PC-9 (cell line): ENCODE measurements at regions of chr22 and their contacts with region 1.

Region 1: GRCh38 chr22:36856121-36856791 is 4.5 kb upstream of the NCF4 start:
- DNase-seq: peak; percentile 68 to 94
- H3K4me3 ChIP-seq: peak overlapping the region; percentile 13; the same call in 1 of the 2 replicates
- H3K27ac ChIP-seq: no peak overlapping the region
- H3K4me1 ChIP-seq: peaks cover 7% of the 10 kb centered on the region
- H3K27me3 ChIP-seq: no peaks in the 10 kb centered on the region
- CTCF ChIP-seq: peak; percentile 100

Region 2: DNA sequence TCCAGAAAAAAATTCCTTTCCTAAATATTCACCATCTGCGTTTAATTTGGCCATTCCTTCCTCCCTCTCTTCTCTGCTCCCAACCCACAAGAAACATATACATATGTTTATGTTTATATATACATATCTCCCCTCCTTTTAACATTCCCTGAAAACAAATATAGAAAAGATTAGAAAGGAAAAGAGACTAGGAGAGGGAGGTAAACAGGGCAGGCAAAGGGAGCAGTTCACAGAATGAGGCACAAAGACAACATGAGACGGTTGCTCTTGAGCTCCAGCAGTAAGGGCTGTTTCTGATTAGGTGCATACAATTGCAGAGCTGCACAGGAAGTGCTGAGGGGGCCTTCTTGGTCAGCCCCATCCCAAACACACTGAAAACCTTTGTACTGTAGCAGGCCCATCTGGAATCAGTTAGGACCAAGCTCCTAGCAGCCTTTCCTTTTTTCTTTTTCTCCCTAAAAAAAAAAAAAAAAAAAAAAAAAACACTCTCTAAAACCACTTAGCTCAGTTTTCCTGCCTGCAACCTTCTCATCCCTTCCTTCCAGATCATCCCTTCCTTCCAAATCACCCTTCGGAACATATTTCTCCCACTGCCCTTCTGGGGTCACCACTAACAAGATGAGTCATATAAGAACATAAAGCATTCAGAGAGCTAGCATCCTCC is 884.7 kb before region 1 on chr22:
- CTCF ChIA-PET with region 1: no interaction called
- POLR2A ChIA-PET with region 1: interaction called, 12 read pairs
- intact Hi-C with region 1: no loop called
- DNase-seq: no peak
- H3K4me3 ChIP-seq: no peak overlapping the region
- H3K27ac ChIP-seq: no peak overlapping the region
- H3K4me1 ChIP-seq: peaks cover 16% of the 10 kb centered on the region
- H3K27me3 ChIP-seq: no peaks in the 10 kb centered on the region
- CTCF ChIP-seq: no peak

Region 3: GRCh38 chr22:36781656-36782627 is 74.3 kb before region 1 on chr22:
- CTCF ChIA-PET with region 1: interaction called, 10 read pairs
- POLR2A ChIA-PET with region 1: no interaction called
- intact Hi-C with region 1: loop called (anchors 1 kb)
- DNase-seq: peak; percentile 80 to 93
- H3K4me3 ChIP-seq: no peak overlapping the region
- H3K27ac ChIP-seq: no peak overlapping the region
- H3K4me1 ChIP-seq: peaks cover 5% of the 10 kb centered on the region
- H3K27me3 ChIP-seq: peaks cover 9% of the 10 kb centered on the region
- CTCF ChIP-seq: peak; percentile 99

Region 4: DNA sequence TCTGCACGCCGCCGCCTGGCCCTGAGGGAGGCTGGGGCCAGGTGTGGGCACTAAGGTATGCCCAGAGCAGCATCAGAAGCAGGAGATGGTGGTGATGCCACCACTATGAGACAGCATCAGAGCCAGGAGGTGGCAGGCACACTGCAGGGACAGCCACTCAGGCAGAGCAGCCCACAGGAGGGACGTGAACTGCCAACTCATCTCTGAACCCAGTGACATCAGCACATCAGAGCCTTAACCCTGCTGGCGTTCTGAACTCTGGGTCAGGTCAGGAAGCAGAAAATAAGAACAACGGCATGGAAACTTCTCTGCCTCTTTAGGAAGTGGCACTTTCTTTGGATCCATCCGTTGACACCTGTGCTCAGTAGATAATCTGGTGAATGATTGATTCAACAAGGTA is 65.6 kb before region 1 on chr22:
- CTCF ChIA-PET with region 1: interaction called, 3 read pairs
- POLR2A ChIA-PET with region 1: no interaction called
- intact Hi-C with region 1: loop called (anchors 1 kb)
- DNase-seq: peak in 1 of 2 experiments; percentile 59
- H3K4me3 ChIP-seq: no peak overlapping the region
- H3K27ac ChIP-seq: no peak overlapping the region
- H3K4me1 ChIP-seq: no peaks in the 10 kb centered on the region
- H3K27me3 ChIP-seq: peaks cover 19% of the 10 kb centered on the region
- CTCF ChIP-seq: 0 out of 2 replicates have a peak, but pooled peaks have one; percentile 21

Region 5: DNA sequence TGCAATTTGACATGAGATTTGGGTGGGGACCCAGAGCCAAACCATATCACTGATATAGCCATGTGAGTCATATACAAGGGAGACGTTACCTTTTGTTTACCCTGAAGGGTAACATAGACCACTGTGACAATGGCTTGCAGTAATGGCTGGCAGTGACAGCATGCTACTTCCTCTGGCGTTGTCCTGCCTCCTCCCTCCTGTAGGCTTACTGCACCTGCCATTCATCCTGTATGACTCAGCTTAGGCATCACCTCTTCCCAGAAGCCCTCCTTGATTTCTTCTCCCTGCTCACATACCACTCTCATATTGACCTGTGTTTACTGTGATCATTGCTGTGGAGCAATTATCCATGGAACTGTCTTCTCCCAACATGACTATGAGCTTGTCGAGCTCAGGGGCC is 27.4 kb before region 1 on chr22:
- CTCF ChIA-PET with region 1: no interaction called
- POLR2A ChIA-PET with region 1: no interaction called
- intact Hi-C with region 1: no loop called
- DNase-seq: peak; percentile 22 to 67
- H3K4me3 ChIP-seq: no peak overlapping the region
- H3K27ac ChIP-seq: no peak overlapping the region
- H3K4me1 ChIP-seq: peaks cover 4% of the 10 kb centered on the region; the same call in 1 of the 2 replicates
- H3K27me3 ChIP-seq: no peaks in the 10 kb centered on the region
- CTCF ChIP-seq: no peak

Region 6: DNA sequence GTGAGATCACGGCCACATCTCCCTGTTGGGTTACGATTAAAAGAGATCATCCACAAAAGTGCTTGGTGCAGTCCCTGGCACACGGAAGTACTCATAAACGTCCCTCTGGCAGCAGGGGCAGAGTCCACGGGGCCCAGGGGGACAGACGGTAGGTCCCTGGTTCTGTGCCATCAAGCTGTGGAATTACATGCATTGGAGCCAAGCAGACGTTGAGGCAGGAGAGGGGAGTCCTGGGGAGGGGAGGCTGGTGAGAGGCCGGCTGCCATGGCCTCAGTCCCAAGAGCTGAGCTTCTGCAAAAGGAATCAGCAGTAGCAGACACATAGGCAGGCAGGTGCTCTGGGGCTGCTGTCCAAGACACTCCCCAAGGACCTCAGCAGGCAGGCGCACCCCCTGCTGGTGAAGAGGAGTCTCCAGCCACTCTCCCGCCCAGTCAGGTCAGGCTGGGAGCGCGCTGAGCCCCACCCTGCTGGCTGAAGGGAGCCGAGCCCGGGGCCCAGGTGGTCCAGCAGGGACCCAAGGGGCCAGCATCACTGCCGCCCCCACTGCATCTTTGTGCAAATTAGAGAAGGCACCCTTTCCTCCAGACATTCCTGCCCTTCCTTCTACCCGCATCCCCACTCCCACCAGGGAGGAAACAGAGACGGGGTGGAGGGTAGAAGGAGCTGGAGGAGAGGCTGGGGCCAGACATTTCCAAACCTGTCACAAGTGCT is 187.7 kb after region 1 on chr22:
- CTCF ChIA-PET with region 1: interaction called, 5 read pairs
- POLR2A ChIA-PET with region 1: no interaction called
- intact Hi-C with region 1: loop called (anchors 5 kb)
- DNase-seq: peak; percentile 74 to 80
- H3K4me3 ChIP-seq: no peak overlapping the region
- H3K27ac ChIP-seq: no peak overlapping the region
- H3K4me1 ChIP-seq: peaks cover 38% of the 10 kb centered on the region
- H3K27me3 ChIP-seq: no peaks in the 10 kb centered on the region
- CTCF ChIP-seq: peak; percentile 93